ENCODE measurements at regions of chr2 and their contacts with region 1.

Region 1: DNA sequence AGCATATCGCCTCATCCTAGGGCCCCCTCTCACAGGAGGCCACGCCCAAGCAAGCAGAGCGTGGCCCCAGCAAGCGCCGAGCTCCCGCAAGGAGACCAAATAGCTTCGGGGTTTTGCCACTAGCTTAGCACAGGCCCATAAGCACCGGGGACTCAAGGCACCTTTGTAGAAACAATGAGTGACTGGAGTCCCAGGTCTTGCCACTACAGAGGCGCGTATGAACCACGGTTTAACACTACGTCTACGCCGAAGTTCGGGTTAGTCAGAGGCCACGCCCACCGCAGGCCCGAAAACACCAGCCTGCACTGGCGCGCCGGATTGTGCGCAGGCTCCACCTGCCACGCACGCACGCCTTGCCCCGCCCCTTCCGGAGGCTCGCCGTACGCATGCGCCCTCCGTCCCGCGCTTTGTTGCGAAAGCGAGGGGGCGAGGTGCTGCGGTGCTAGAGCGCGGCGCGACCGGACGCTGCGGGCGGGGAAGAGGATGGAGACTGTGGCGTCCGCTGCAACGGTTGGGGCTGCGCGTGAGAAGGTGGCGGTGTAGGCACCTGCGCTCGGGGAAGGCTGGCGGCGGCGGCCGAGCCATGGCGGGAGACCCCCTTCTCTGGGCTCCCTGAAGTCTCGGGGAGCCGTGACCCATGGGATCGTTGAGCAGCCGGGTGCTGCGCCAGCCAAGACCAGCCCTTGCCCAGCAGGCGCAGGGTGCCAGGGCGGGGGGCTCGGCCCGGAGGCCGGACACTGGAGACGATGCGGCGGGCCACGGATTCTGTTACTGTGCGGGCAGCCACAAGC is at the start of gene GMCL1:
- DNase-seq: peak; percentile 99
- ATAC-seq: peak; percentile 96
- H3K4me3 Mint-ChIP-seq: peak within 1 kb of the TSS; percentile 83
- H3K27ac Mint-ChIP-seq: peak within 1 kb of the TSS; percentile 94
- H3K4me1 Mint-ChIP-seq: peaks cover 49% of the 10 kb centered on the region
- H3K27me3 Mint-ChIP-seq: no peaks in the 10 kb centered on the region
- total RNA-seq, gene GMCL1: 14.5 to 20.3 TPM

Region 2: DNA sequence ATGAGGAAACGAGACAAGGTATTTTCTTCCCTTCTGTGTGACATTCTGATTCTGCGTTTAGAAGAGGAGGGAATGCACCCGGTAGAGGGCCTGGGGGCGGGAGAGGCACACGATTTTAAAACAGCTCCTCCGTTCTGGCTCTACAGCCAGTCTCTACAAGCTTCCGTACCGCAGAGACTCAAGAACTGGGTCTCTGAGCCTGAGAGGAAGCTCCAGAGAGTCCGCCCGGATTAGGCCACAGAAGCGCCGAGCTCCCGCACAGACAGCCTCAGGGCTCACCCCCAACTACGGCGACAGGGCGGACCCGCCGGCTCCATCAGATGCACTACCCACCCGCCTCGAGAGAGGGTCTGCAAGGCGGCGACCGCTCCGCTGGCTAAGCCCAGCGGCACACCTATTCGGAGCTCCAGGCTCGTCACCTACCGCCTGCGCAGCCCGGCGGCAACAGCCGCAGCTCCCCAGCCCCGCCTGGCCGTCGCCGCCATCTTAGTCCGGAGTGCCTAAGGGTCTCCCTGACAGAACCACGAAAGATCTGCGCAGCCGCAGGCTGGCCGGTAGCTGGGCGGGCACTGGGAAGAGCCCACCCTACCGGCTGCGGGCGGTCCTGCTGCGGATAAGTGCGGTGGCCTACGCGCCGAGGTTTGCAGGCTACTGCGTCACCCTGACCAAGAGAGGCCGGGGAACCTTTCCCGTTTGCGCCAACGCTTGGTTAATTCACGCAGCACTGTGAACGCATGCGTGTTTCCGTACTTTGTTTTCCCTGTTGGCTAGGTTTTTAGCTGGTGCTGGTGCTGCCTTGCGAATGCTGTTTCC is 392.3 kb before region 1 on chr2 and contains the start of gene NFU1:
- CTCF ChIA-PET with region 1: no interaction called
- POLR2A ChIA-PET with region 1: no interaction called
- intact Hi-C with region 1: loop called in 1 of 2 experiments (anchors 2 kb)
- DNase-seq: peak; percentile 94
- ATAC-seq: peak; percentile 93
- H3K4me3 Mint-ChIP-seq: peak within 1 kb of the TSS; percentile 93
- H3K27ac Mint-ChIP-seq: peak within 1 kb of the TSS; percentile 95
- H3K4me1 Mint-ChIP-seq: peaks cover 25% of the 10 kb centered on the region
- H3K27me3 Mint-ChIP-seq: no peaks in the 10 kb centered on the region
- total RNA-seq, gene NFU1: 30.0 to 34.3 TPM

Region 3: DNA sequence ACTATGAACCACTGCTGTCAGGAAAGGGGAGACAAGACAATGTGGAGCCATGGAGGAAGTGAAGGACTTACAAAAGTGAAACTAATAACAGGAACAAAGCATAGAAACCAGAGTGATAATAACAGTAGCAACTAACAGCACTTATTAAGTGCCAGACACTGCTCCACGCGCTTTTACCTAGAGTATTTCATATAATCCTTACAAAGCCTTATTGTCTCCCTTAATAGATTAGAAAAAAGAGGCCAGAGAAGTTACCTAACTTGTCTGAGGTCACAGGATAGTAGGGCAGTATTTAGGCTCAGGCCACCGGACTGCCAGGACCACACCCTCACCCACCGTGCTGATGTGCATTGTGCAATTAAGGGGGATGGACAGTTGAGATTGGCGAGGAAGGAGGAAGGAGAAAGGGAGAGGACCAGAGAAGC is 293.6 kb before region 1 on chr2:
- CTCF ChIA-PET with region 1: no interaction called
- POLR2A ChIA-PET with region 1: no interaction called
- intact Hi-C with region 1: no loop called
- DNase-seq: no peak
- ATAC-seq: no peak
- H3K4me3 Mint-ChIP-seq: no peak overlapping the region
- H3K27ac Mint-ChIP-seq: peak overlapping the region; percentile 12
- H3K4me1 Mint-ChIP-seq: peaks cover 15% of the 10 kb centered on the region
- H3K27me3 Mint-ChIP-seq: no peaks in the 10 kb centered on the region

Region 4: GRCh38 chr2:69770193-69771146 is 59.0 kb before region 1 on chr2:
- CTCF ChIA-PET with region 1: interaction called, 6 read pairs
- POLR2A ChIA-PET with region 1: no interaction called
- intact Hi-C with region 1: loop called in 1 of 2 experiments (anchors 5 kb)
- DNase-seq: peak; percentile 37
- ATAC-seq: peak; percentile 28
- H3K4me3 Mint-ChIP-seq: no peak overlapping the region
- H3K27ac Mint-ChIP-seq: peak overlapping the region; percentile 38
- H3K4me1 Mint-ChIP-seq: peaks cover 49% of the 10 kb centered on the region
- H3K27me3 Mint-ChIP-seq: no peaks in the 10 kb centered on the region

Region 5: DNA sequence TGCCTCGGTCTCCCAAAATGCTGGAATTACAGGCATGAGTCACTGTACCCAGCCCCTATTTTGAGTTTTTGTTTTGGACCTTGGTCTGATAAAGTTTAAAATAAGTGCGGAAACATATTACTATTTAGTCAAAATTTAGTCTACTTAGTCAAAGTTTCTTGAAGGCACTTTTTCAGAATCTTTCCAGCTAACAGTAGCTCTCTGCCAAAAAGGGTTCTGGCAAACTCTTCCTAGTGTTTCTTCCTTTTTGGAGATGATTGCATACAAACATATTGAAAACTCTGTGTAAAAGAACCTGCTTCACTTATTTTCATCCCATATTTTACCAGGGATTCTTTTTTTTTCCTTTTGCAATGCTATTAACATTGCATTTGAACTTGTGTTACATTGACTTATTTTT is 28.8 kb after region 1 on chr2:
- CTCF ChIA-PET with region 1: no interaction called
- POLR2A ChIA-PET with region 1: no interaction called
- intact Hi-C with region 1: no loop called
- DNase-seq: no peak
- ATAC-seq: no peak
- H3K4me3 Mint-ChIP-seq: no peak overlapping the region
- H3K27ac Mint-ChIP-seq: no peak overlapping the region
- H3K4me1 Mint-ChIP-seq: no peaks in the 10 kb centered on the region
- H3K27me3 Mint-ChIP-seq: no peaks in the 10 kb centered on the region

Region 6: GRCh38 chr2:69893684-69894551 is 64.5 kb after region 1 on chr2 and contains the start of gene SNRNP27:
- CTCF ChIA-PET with region 1: interaction called, 3 read pairs
- POLR2A ChIA-PET with region 1: interaction called, 4 read pairs
- intact Hi-C with region 1: loop called in 1 of 2 experiments (anchors 1 kb)
- DNase-seq: peak; percentile 89
- ATAC-seq: peak; percentile 87
- H3K4me3 Mint-ChIP-seq: peak within 1 kb of the TSS; percentile 98
- H3K27ac Mint-ChIP-seq: peak within 1 kb of the TSS; percentile 99
- H3K4me1 Mint-ChIP-seq: peaks cover 34% of the 10 kb centered on the region
- H3K27me3 Mint-ChIP-seq: no peaks in the 10 kb centered on the region
- total RNA-seq, gene SNRNP27: 67.7 to 76.6 TPM

Region 7: GRCh38 chr2:70086838-70087701 is 257.6 kb after region 1 on chr2 and contains the start of gene PCBP1:
- CTCF ChIA-PET with region 1: no interaction called
- POLR2A ChIA-PET with region 1: no interaction called
- intact Hi-C with region 1: loop called in 1 of 2 experiments (anchors 1 kb)
- DNase-seq: peak; percentile 98
- ATAC-seq: peak; percentile 37
- H3K4me3 Mint-ChIP-seq: peak within 1 kb of the TSS; percentile 100
- H3K27ac Mint-ChIP-seq: peak within 1 kb of the TSS; percentile 100
- H3K4me1 Mint-ChIP-seq: peaks cover 52% of the 10 kb centered on the region
- H3K27me3 Mint-ChIP-seq: no peaks in the 10 kb centered on the region
- total RNA-seq, gene PCBP1: 417 to 450 TPM

Region 8: DNA sequence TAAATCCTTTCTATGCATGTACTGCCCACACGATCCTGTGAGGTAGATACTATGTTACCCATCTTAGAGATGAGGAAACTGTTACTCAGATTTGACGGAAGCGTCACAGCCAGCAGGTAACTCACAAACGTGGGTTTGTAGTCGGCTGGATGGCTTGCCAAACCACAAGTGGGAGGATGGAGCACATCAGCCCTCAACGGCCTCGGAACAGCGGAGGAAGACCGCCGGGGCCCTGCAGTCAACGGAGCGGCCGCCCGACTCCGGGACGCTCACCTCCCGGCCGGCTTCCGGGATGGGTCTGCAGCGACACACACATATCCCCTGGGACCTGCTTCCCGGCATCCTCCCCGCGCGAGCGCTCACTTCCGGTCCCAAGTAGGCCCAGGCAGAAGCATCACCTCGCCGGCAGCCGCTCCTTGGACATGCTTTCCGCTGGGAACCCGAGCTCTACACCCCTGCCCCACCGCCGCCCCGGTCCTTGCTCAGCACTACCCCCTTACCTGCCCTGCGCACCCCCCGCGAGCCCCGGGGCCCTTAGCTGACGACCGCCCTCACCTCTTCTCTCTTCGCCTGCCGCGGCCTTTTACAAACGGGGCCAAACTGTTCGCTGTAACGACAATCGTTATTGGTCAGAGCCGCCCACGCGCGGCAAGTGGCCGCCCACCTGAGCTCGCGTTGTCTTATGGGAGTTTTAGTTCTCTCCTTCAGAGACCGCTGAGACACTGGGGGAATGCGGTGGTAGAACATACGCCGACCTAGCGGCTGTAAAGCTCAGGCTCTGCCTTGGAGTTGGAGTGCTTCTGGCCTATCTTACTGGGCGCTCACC is 361.2 kb after region 1 on chr2 and contains the start of gene C2orf42:
- CTCF ChIA-PET with region 1: no interaction called
- POLR2A ChIA-PET with region 1: no interaction called
- intact Hi-C with region 1: loop called in 1 of 2 experiments (anchors 1 kb)
- DNase-seq: peak; percentile 98
- ATAC-seq: peak; percentile 91
- H3K4me3 Mint-ChIP-seq: peak within 1 kb of the TSS; percentile 84
- H3K27ac Mint-ChIP-seq: peak within 1 kb of the TSS; percentile 97
- H3K4me1 Mint-ChIP-seq: peaks cover 16% of the 10 kb centered on the region
- H3K27me3 Mint-ChIP-seq: no peaks in the 10 kb centered on the region
- total RNA-seq, gene C2orf42: 22.6 to 23.3 TPM

Measured in activated CD4-positive, alpha-beta T cell treated with anti-CD3 and anti-CD28 coated beads for 36 hours (primary cell).